PC-9 (cell line): ENCODE measurements at regions of chr3 and their contacts with region 1.

Region 1: DNA sequence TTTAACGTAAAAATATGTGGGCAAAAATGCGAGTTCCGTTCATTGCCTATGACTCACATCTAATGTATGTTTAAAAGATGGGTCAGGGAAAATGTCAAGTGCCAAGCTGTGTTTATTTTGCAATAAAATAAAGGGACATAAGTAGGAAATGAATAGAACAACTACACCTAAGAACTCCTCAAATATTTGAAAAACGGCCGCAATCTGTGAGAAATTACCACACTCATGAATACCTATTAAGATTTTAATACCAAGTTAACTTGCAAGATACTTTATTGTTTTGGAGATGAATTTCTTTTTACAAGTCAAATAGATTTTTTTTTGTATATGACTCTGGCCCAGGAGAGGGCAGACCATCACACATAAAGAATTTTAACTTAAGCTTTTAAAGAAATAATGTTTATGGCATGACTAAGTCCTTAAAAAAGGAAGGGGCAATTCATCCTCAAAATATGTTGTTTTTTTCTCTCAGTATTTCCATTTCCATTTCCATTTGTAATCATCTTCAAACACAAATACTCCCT is 152.7 kb downstream of the SUCNR1 start:
- DNase-seq: peak; percentile 22 to 90
- H3K4me3 ChIP-seq: no peak overlapping the region; the same call in 1 of the 2 replicates
- H3K27ac ChIP-seq: peak overlapping the region; percentile 81
- H3K4me1 ChIP-seq: peaks cover 38% of the 10 kb centered on the region
- H3K27me3 ChIP-seq: no peaks in the 10 kb centered on the region
- CTCF ChIP-seq: peak; percentile 71

Region 2: GRCh38 chr3:151838583-151839312 is 187.3 kb before region 1 on chr3:
- CTCF ChIA-PET with region 1: no interaction called
- POLR2A ChIA-PET with region 1: interaction called, 4 read pairs
- intact Hi-C with region 1: loop called (anchors 1 kb)
- DNase-seq: peak; percentile 42 to 60
- H3K4me3 ChIP-seq: no peak overlapping the region
- H3K27ac ChIP-seq: no peak overlapping the region
- H3K4me1 ChIP-seq: peaks cover 16% of the 10 kb centered on the region
- H3K27me3 ChIP-seq: no peaks in the 10 kb centered on the region
- CTCF ChIP-seq: peak; percentile 92

Region 3: GRCh38 chr3:151933234-151933853 is 92.8 kb before region 1 on chr3:
- CTCF ChIA-PET with region 1: no interaction called
- POLR2A ChIA-PET with region 1: no interaction called
- intact Hi-C with region 1: loop called (anchors 1 kb)
- DNase-seq: peak in 1 of 2 experiments; percentile 49
- H3K4me3 ChIP-seq: no peak overlapping the region
- H3K27ac ChIP-seq: peak overlapping the region; percentile 42
- H3K4me1 ChIP-seq: peaks cover 11% of the 10 kb centered on the region
- H3K27me3 ChIP-seq: no peaks in the 10 kb centered on the region
- CTCF ChIP-seq: no peak

Region 4: GRCh38 chr3:151960961-151961579 is 65.0 kb before region 1 on chr3:
- CTCF ChIA-PET with region 1: no interaction called
- POLR2A ChIA-PET with region 1: no interaction called
- intact Hi-C with region 1: no loop called
- DNase-seq: no peak
- H3K4me3 ChIP-seq: no peak overlapping the region
- H3K27ac ChIP-seq: no peak overlapping the region
- H3K4me1 ChIP-seq: no peaks in the 10 kb centered on the region
- H3K27me3 ChIP-seq: no peaks in the 10 kb centered on the region
- CTCF ChIP-seq: no peak

Region 5: GRCh38 chr3:151983538-151983937 is 42.6 kb before region 1 on chr3:
- CTCF ChIA-PET with region 1: no interaction called
- POLR2A ChIA-PET with region 1: no interaction called
- intact Hi-C with region 1: no loop called
- DNase-seq: no peak
- H3K4me3 ChIP-seq: no peak overlapping the region
- H3K27ac ChIP-seq: no peak overlapping the region
- H3K4me1 ChIP-seq: no peaks in the 10 kb centered on the region
- H3K27me3 ChIP-seq: no peaks in the 10 kb centered on the region
- CTCF ChIP-seq: no peak

Region 6: DNA sequence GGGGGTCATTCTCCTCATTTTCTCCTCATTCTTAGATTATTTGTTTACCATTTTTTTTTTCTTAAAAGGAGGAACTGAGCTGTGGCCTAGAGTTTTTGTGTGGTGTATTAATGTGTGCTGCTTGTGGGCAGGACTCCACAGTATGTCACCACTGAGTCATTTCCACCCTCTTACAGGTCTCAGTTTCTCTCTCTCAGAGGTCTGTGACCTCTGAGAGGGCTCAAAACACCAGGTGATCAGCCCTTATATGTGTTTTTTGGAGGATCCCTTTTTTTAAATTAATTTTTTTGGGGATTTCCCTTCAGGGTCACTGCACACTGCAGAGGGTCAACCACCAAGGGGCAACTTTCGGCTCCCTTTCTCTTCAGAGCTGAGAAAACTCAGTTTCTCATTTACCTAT is 13.8 kb after region 1 on chr3:
- CTCF ChIA-PET with region 1: no interaction called
- POLR2A ChIA-PET with region 1: no interaction called
- intact Hi-C with region 1: no loop called
- DNase-seq: no peak
- H3K4me3 ChIP-seq: no peak overlapping the region
- H3K27ac ChIP-seq: no peak overlapping the region
- H3K4me1 ChIP-seq: 0 out of 2 replicates have a peak, but pooled peaks cover 8% of the 10 kb centered on the region
- H3K27me3 ChIP-seq: no peaks in the 10 kb centered on the region
- CTCF ChIP-seq: no peak

Region 7: DNA sequence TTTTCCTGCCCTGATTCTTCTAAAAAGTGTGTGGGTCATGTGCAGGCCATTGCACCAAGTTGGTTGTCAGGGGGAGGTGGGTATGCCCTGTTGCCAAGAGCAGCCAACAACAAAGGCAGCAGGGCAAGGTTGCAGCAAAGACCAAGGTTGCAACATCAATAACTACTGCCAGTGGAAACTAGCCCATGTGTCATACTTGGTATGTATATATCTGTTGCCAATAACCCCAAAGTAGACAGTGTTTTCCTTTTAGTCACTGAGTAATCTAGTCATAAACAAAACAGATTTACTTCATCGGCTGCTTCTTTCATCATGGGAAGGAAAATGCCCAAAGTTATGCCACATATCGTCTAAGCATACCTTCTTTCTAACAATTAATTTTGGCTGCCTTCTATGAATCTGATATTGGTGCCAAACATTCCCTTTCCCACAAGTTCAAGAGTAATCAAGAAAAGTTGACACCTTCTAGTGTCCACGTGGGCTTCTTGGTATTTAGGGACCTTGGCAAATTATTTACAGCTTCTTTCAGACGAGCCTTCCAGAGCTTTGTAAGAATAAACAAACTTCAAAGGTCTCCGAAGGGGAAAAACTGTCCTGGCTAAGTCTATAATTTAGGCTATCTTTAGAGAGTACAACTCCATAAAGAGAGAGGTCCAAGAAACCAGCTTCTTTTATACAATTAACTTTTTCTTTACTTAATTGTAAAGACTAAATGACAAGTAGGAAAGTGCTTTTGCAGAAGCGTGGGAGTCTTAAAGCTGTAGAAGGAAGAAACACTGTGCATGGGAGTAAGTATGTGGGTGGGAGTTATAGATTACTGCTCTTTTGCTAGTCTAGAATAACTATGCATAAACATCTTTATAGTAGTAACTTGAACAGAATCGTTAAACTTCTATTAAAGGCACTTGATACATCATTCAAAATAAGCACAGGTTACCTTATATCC is 232.6 kb after region 1 on chr3:
- CTCF ChIA-PET with region 1: no interaction called
- POLR2A ChIA-PET with region 1: no interaction called
- intact Hi-C with region 1: loop called (anchors 1 kb)
- DNase-seq: peak; percentile 82 to 99
- H3K4me3 ChIP-seq: peak overlapping the region; percentile 22; the same call in 1 of the 2 replicates
- H3K27ac ChIP-seq: peak overlapping the region; percentile 54
- H3K4me1 ChIP-seq: peaks cover 26% of the 10 kb centered on the region
- H3K27me3 ChIP-seq: no peaks in the 10 kb centered on the region
- CTCF ChIP-seq: no peak

Region 8: GRCh38 chr3:152328841-152329240 is 302.7 kb after region 1 on chr3:
- CTCF ChIA-PET with region 1: no interaction called
- POLR2A ChIA-PET with region 1: no interaction called
- intact Hi-C with region 1: loop called (anchors 2 kb)
- DNase-seq: peak in 1 of 2 experiments; percentile 91
- H3K4me3 ChIP-seq: peak overlapping the region; percentile 28
- H3K27ac ChIP-seq: peak overlapping the region; percentile 88
- H3K4me1 ChIP-seq: peaks cover 52% of the 10 kb centered on the region
- H3K27me3 ChIP-seq: no peaks in the 10 kb centered on the region
- CTCF ChIP-seq: no peak